ENCODE measurements at regions of chr2 and their contacts with region 1.

Region 1: GRCh38 chr2:164792316-164793178 is 49.1 kb downstream of the COBLL1 start:
- DNase-seq: no peak
- ATAC-seq: peak; percentile 54
- H3K4me3 ChIP-seq: no peak overlapping the region
- H3K27ac ChIP-seq: no peak overlapping the region
- H3K4me1 ChIP-seq: no peaks in the 10 kb centered on the region
- H3K27me3 ChIP-seq: no peaks in the 10 kb centered on the region
- CTCF ChIP-seq: no peak

Region 2: DNA sequence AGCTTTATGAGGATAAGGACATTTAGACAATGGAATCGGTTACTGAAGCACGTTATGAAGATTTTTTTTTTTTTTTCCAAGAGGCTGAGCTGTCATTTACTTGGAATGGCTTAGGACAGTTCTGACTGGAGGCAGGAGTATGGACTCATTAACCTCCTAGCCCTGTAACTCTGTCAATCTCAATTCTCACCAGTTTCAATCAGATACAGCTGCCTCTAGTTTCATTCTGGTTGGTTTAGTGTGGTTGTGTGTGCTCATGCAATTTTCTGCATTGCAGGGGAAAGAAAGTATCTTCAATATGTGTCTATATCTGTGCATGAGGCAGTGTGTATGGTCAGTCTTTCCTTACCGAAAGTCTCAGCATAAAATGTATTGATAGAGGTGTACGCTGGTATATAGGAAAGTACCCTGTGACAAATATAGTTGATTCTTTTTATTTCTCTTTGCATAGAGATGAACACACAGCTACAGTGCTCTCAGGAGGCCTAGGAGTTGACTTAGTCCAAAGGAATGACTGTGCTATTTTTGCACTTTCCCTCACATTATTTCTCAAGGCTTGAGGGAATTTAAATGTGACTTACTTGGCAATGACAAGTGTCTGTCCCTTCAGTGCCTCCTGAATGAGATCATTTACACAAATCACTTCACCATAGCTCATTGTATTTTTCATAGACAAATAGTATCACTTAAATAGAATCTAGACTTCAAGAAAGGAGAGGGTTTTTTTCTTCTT is 120.7 kb before region 1 on chr2:
- CTCF ChIA-PET with region 1: no interaction called
- POLR2A ChIA-PET with region 1: no interaction called
- intact Hi-C with region 1: no loop called
- DNase-seq: no peak
- ATAC-seq: no peak
- H3K4me3 ChIP-seq: no peak overlapping the region
- H3K27ac ChIP-seq: no peak overlapping the region
- H3K4me1 ChIP-seq: no peaks in the 10 kb centered on the region
- H3K27me3 ChIP-seq: no peaks in the 10 kb centered on the region
- CTCF ChIP-seq: no peak

Region 3: GRCh38 chr2:164816046-164816445 is 23.5 kb after region 1 on chr2:
- CTCF ChIA-PET with region 1: interaction called, 14 read pairs
- POLR2A ChIA-PET with region 1: no interaction called
- intact Hi-C with region 1: no loop called
- DNase-seq: no peak
- ATAC-seq: no peak
- H3K4me3 ChIP-seq: no peak overlapping the region
- H3K27ac ChIP-seq: no peak overlapping the region
- H3K4me1 ChIP-seq: no peaks in the 10 kb centered on the region
- H3K27me3 ChIP-seq: no peaks in the 10 kb centered on the region
- CTCF ChIP-seq: no peak

Measured in PC-3 (cell line).